MCF 10A (cell line): ENCODE measurements at regions of chr1 and their contacts with region 1.

Region 1: DNA sequence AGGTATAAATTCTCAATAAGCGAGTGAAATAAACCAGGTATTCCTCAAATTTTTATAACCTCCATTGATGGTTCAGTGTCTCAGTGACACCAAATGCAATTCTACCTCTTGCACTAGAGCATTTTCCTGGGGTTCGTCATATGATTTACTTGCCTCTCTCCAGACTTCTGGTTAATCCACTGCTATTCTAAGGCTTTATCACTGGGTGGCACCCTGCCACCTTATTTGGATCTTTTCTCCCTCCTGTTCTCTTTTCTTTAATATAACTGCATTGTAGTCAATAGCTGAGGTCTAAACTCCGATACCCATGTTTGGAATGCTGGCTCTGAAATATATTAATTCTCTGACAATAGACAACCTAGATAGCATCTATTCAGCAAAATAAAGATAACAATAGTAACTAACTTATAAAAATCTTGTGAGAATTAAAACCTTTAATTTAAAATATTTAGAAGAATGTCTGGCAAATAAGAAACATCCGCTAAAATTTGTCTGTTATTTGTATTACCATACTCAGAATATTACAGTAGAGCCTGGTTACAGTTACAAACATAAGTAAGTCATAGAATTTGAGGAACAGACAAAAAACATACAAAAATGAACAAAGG is 436.4 kb downstream of the PLA2G4A start:
- DNase-seq: peak; percentile 85
- H3K4me3 Mint-ChIP-seq: no peak overlapping the region
- H3K27ac Mint-ChIP-seq: no peak overlapping the region
- H3K4me1 Mint-ChIP-seq: peaks cover 11% of the 10 kb centered on the region
- H3K27me3 Mint-ChIP-seq: no peaks in the 10 kb centered on the region
- CTCF ChIP-seq: peak; percentile 84

Region 2: GRCh38 chr1:187280031-187280430 is 14.9 kb after region 1 on chr1:
- CTCF ChIA-PET with region 1: interaction called, 11 read pairs
- POLR2A ChIA-PET with region 1: interaction called, 3 read pairs
- intact Hi-C with region 1: no loop called
- DNase-seq: no peak
- H3K4me3 Mint-ChIP-seq: no peak overlapping the region
- H3K27ac Mint-ChIP-seq: no peak overlapping the region
- H3K4me1 Mint-ChIP-seq: no peaks in the 10 kb centered on the region
- H3K27me3 Mint-ChIP-seq: no peaks in the 10 kb centered on the region
- CTCF ChIP-seq: no peak

Region 3: GRCh38 chr1:187413405-187414182 is 148.5 kb after region 1 on chr1:
- CTCF ChIA-PET with region 1: interaction called, 5 read pairs
- POLR2A ChIA-PET with region 1: no interaction called
- intact Hi-C with region 1: loop called (anchors 2 kb)
- DNase-seq: peak; percentile 45
- H3K4me3 Mint-ChIP-seq: no peak overlapping the region
- H3K27ac Mint-ChIP-seq: no peak overlapping the region
- H3K4me1 Mint-ChIP-seq: peaks cover 18% of the 10 kb centered on the region
- H3K27me3 Mint-ChIP-seq: no peaks in the 10 kb centered on the region
- CTCF ChIP-seq: peak; percentile 53

Region 4: DNA sequence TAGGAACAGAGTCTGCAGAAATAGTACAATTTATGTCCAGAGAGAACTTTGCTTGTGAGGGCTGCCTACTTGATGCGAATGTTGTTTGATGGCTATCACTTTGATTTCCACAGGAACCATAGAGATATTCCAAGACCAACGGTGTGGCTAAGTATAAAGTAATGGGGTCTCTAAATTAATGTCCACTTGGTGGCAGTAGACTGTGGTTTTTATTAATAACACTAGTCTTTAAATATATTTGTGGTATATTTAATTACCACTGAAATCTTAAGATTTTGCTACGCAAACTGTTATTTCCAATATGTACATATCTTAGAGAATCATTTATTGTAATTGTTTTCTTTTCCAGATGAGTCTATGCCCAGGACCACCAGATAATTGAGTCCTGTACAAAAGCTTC is 211.6 kb after region 1 on chr1:
- CTCF ChIA-PET with region 1: no interaction called
- POLR2A ChIA-PET with region 1: no interaction called
- intact Hi-C with region 1: loop called (anchors 10 kb)
- DNase-seq: peak; percentile 44
- H3K4me3 Mint-ChIP-seq: no peak overlapping the region
- H3K27ac Mint-ChIP-seq: no peak overlapping the region
- H3K4me1 Mint-ChIP-seq: peaks cover 6% of the 10 kb centered on the region
- H3K27me3 Mint-ChIP-seq: no peaks in the 10 kb centered on the region
- CTCF ChIP-seq: peak; percentile 42

Region 5: DNA sequence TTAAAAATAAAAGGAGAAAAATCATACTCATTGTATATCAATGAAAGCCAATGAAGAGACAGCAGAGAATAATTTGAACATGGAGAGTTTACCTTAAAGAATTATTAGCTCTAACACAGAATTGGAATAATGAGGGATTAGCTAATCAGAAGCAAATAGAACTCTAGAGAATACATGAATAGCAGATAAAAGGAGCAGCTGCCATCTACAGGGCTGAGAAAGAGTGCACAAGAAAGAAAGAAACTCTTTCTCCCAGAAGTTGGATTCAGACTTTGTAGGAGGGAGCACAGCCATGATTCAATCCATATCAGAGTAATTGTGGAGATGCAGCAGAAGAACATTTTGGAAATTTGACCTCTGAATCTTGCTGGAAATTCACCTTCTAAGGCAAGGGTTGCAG is 734.9 kb after region 1 on chr1:
- CTCF ChIA-PET with region 1: interaction called, 3 read pairs
- POLR2A ChIA-PET with region 1: no interaction called
- intact Hi-C with region 1: loop called (anchors 2 kb)
- DNase-seq: peak; percentile 8
- H3K4me3 Mint-ChIP-seq: no peak overlapping the region
- H3K27ac Mint-ChIP-seq: no peak overlapping the region
- H3K4me1 Mint-ChIP-seq: no peaks in the 10 kb centered on the region
- H3K27me3 Mint-ChIP-seq: no peaks in the 10 kb centered on the region
- CTCF ChIP-seq: peak; percentile 14

Region 6: DNA sequence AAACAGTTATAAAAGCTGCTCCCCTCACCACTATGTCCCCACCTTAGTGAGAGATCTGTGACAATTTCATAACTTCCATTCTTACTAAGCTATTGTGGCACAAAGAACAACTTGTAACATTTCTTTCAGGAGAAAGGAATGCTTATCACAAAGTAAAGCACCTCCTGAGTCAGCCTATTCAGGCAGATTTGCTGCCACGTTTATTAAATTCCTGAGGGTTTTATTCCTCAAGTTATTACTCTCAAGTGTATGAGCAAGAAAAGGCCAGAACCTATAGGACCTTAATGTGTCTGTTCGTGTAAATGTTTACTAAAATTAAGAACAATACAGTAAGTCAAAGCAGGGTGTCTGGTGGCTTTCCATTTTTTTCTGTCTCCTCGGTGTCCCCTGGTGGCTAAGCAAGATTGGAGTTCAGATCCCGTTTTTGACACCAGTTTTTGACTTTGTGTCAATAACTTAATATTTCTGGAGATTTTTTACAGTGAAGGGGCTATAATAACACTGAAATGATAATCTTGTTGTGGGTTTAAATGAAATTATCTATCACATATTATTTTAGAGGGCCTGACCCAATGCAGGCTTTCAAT is 1673.0 kb after region 1 on chr1:
- CTCF ChIA-PET with region 1: interaction called, 3 read pairs
- POLR2A ChIA-PET with region 1: no interaction called
- intact Hi-C with region 1: loop called (anchors 1 kb)
- DNase-seq: peak; percentile 43
- H3K4me3 Mint-ChIP-seq: no peak overlapping the region
- H3K27ac Mint-ChIP-seq: no peak overlapping the region
- H3K4me1 Mint-ChIP-seq: no peaks in the 10 kb centered on the region
- H3K27me3 Mint-ChIP-seq: no peaks in the 10 kb centered on the region
- CTCF ChIP-seq: peak; percentile 46